Psoas muscle (tissue), 8 donors: ENCODE measurements at regions of chr9 and their contacts with region 1.

Region 1: DNA sequence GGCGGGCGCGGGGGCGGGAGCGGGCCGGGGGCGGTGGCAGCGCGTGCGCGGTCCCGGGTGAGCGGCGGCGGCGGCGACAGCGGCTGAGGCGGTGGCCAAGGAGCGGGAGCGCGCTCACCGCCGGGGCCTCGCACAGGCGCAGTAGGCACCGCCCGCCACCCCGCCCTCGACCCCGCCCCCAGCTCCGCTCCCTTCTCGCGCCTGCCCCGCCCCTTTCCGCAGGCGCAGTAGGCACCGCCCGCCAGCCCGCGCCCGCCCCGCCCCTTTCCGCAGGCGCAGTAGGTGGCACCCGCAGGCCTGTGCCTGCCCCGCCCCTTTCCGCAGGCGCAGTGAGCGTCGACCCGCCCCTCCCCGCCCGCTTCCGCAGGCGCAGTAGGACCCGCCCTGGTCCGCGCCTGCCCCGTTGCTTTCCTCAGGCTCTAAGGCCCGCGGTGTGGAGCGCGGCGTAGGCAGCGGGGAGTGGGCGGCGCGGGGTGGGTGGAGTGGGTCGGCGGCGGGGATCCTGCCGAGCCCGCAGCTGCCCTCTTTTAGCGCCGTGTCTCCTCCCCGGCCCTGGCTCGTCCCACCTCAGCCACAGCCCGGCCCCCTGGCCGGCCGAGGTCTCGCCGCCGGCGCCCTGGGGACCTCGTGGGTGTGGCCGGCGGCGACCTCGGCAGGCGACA is at the start of gene CAMSAP1:
- DNase-seq: peak; percentile 93 to 97
- ATAC-seq: peak; percentile 88 to 92 (median 90)
- H3K4me3 ChIP-seq: peak within 1 kb of the TSS; percentile 81
- H3K27ac ChIP-seq: peak within 1 kb of the TSS; percentile 94
- H3K4me1 ChIP-seq: peaks cover 49% of the 10 kb centered on the region
- H3K27me3 ChIP-seq: no peaks in the 10 kb centered on the region
- CTCF ChIP-seq: no peak
- total RNA-seq, gene CAMSAP1: 38.0 to 48.5 (median 43.4) TPM

Region 2: DNA sequence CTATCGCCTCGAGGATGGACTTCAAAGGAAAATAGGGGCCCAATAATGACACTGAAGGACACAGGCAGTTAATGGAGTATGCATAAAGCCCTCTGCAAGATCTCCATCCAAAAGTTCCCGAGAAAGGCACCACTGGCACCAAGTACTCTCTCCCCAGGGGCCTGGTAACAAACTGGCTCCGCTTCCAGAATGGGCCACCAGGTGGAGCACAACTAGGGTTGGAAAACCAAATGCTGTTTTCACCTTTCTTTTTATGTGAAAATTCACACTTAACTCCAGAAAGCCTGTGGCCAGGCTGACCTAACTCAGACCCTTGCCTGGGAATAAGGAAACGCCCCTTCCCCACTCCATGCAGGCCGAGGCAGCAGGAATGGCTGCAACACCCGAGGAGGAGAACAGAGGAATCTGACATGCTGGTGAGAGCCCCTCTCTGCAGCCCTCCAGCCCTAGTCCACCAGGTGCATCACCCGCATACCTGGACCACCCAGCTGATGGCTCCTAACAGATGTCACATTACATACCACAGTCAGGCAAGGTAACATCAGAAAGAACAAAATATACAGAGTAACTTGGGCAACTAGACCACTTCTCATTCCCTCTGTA is 43.0 kb before region 1 on chr9:
- intact Hi-C with region 1: loop called in 1 of 2 experiments (anchors 5 kb)
- DNase-seq: peak; percentile 64 to 79
- ATAC-seq: peak in 3 of 4 donors; percentile 64 to 80 (median 66)
- H3K4me3 ChIP-seq: no peak overlapping the region
- H3K27ac ChIP-seq: no peak overlapping the region
- H3K4me1 ChIP-seq: peaks cover 4% of the 10 kb centered on the region
- H3K27me3 ChIP-seq: no peaks in the 10 kb centered on the region
- CTCF ChIP-seq: peak; percentile 81

Region 3: DNA sequence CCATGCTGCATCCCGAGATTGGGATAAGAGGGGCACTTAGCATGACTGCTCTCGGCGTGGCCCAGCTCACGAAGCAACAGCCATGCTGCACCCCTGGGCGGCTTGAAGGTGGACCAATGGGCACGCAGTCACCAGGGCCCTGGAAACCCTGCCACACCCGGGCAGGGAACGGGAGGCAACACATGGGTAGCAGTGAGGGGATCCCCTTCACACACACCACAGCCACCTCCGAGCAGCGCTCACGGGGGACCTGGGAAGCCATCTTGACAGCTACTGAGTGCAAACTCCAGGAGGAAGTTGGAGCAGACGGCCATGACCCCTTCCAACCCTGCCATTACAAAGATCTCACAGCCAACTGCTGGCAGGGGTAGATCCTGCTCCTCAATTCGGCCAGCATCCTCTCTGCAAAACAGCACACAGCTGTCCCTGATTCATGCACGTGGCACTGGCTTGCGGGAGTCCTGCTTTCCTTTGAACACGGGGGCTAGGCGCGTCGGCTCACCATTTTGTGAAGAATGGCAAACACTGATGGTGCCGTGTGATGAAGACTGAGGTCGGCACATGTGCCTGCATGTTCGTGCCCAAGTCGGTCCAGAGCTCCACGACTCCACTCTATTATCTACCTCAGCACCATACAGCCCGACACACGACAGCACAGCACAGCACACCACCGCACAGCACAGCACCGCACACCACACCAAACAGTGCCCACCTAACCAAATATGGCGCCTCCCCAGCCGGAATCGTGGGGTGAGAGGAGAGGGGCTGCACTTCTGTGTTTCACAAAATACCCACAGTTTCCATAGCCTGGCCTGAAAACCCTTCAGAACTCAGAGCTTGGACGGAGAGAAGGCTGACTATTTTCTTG is 48.6 kb after region 1 on chr9:
- intact Hi-C with region 1: loop called (anchors 2 to 5 kb)
- DNase-seq: no peak
- ATAC-seq: peak in 2 of 4 donors; percentile 9 to 14
- H3K4me3 ChIP-seq: peak overlapping the region; percentile 96
- H3K27ac ChIP-seq: peak overlapping the region; percentile 93
- H3K4me1 ChIP-seq: peaks cover 72% of the 10 kb centered on the region
- H3K27me3 ChIP-seq: no peaks in the 10 kb centered on the region
- CTCF ChIP-seq: no peak

Region 4: GRCh38 chr9:135961277-135961705 is 53.7 kb after region 1 on chr9 and contains the start of gene UBAC1:
- intact Hi-C with region 1: loop called (anchors 2 to 5 kb)
- DNase-seq: peak; percentile 97 to 98
- ATAC-seq: peak; percentile 76 to 87 (median 82)
- H3K4me3 ChIP-seq: peak within 1 kb of the TSS; percentile 96
- H3K27ac ChIP-seq: peak within 1 kb of the TSS; percentile 93
- H3K4me1 ChIP-seq: peaks cover 28% of the 10 kb centered on the region
- H3K27me3 ChIP-seq: no peaks in the 10 kb centered on the region
- CTCF ChIP-seq: peak; percentile 32
- total RNA-seq, gene UBAC1: 140 to 233 (median 174) TPM